Activated CD4-positive, alpha-beta T cell treated with anti-CD3 and anti-CD28 coated beads for 36 hours (primary cell): ENCODE measurements at regions of chr17 and their contacts with region 1.

Region 1: GRCh38 chr17:17959520-17960361 is 12.5 kb downstream of the TOM1L2 start:
- DNase-seq: peak; percentile 67
- ATAC-seq: peak; percentile 61
- H3K4me3 Mint-ChIP-seq: peak overlapping the region; percentile 71
- H3K27ac Mint-ChIP-seq: peak overlapping the region; percentile 95
- H3K4me1 Mint-ChIP-seq: peaks cover 69% of the 10 kb centered on the region
- H3K27me3 Mint-ChIP-seq: no peaks in the 10 kb centered on the region

Region 2: DNA sequence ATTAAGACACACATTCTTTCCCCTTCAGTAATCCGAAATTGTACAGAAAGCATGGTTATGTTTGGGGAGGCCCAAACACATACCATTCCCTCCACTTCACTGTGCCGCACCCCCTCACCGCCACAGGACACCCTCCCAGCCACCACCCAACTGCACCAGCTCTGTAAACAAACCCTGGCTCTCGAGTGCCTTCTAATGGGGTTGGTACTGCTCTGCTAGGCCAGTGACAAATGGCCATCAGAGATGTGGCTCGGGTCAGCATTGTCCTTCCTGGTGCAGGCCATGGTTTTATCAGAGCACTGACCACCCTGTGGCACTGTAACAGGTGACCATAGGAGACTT is 99.0 kb before region 1 on chr17:
- CTCF ChIA-PET with region 1: no interaction called
- POLR2A ChIA-PET with region 1: no interaction called
- intact Hi-C with region 1: no loop called
- DNase-seq: no peak
- ATAC-seq: no peak
- H3K4me3 Mint-ChIP-seq: no peak overlapping the region
- H3K27ac Mint-ChIP-seq: no peak overlapping the region
- H3K4me1 Mint-ChIP-seq: peaks cover 21% of the 10 kb centered on the region
- H3K27me3 Mint-ChIP-seq: no peaks in the 10 kb centered on the region

Region 3: DNA sequence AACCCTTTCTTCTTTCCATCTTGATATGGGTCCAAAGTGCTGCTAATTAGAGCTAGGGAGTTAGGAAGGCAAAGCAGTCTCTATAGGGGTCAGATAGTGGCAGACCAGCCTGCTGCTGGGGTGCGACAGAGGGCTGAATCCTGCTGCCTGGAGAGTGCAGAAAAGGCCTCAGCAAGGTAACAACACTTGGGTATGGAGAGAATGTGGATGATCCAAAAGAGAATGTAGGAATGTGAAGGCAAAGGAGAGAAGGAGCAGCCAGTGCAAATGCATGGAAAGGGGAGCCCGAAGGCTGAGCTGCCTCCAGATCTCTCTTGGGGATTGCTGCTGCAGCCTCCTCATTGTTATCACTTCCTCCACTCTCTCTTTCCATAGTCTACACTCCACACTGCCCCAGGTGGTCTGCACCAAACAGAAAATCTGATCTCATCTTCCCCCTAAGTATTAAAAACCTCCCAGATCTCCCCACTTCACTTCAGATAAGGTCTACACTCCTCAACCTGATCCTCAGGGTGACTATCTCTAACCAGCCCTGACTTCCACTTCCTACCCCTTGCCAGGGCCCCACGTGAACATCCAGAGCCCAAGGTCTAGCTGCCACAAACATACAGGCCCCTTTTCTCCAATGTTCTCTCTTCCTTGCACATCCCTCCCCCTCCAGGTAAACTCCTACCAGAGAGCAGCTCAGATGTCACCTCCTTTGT is 16.3 kb before region 1 on chr17:
- CTCF ChIA-PET with region 1: interaction called, 5 read pairs
- POLR2A ChIA-PET with region 1: no interaction called
- intact Hi-C with region 1: loop called in 1 of 2 experiments (anchors 1 kb)
- DNase-seq: no peak
- ATAC-seq: peak; percentile 46
- H3K4me3 Mint-ChIP-seq: no peak overlapping the region
- H3K27ac Mint-ChIP-seq: peak overlapping the region; percentile 3
- H3K4me1 Mint-ChIP-seq: peaks cover 27% of the 10 kb centered on the region
- H3K27me3 Mint-ChIP-seq: no peaks in the 10 kb centered on the region

Region 4: DNA sequence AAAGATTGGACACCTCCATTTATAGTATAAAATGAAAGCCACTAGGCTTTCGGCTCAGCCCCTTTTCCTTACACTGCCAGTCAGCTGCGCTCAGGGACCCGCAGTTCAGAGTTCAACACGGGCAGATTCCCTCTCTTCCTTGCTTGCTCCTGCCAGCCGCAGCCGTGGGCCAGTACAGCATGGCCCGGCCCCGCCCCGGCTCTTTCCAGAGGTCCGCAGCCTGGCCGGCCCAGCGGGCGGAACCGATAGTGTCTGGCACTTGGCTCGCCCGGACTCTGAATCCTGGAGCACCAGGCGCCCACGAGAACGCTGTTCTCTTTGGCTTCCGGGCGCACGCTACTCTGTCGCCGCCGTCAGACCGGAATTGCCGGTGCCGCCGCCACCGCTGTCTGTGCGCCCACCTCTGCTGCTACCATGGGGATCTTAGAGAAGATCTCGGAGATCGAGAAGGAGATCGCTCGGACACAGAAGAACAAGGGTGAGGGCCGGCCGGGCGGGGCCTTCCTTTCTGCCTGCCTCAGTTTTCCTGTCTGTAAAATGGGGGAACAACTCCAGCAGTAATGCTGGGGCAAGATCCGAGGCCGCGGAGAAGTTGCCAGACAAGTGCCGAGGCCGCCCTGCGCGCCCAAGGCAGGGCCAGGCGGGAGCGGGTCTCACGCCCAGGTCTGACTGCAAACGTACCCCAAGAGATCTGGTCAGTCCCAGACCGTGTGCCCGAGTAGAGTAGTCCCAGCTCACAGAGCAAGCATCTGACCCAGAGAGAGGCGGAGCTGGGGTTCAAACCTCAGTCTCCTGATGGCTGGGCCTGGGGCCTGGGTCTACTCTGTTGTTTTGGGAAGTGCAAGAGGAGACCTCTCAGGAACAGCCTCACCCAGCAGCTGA is 128.1 kb after region 1 on chr17 and contains the start of gene DRG2:
- CTCF ChIA-PET with region 1: no interaction called
- POLR2A ChIA-PET with region 1: no interaction called
- intact Hi-C with region 1: loop called in 1 of 2 experiments (anchors 1 kb)
- DNase-seq: peak; percentile 93
- ATAC-seq: peak; percentile 90
- H3K4me3 Mint-ChIP-seq: peak within 1 kb of the TSS; percentile 99
- H3K27ac Mint-ChIP-seq: peak within 1 kb of the TSS; percentile 98
- H3K4me1 Mint-ChIP-seq: peaks cover 22% of the 10 kb centered on the region
- H3K27me3 Mint-ChIP-seq: no peaks in the 10 kb centered on the region
- total RNA-seq, gene DRG2: 42.5 to 45.6 TPM